Endothelial cell of umbilical vein (primary cell): ENCODE measurements at regions of chr6 and their contacts with region 1.

Region 1: GRCh38 chr6:70310063-70310694 is 7.3 kb upstream of the COL9A1 start:
- DNase-seq: peak; percentile 54
- H3K4me3 ChIP-seq: no peak overlapping the region
- H3K27ac ChIP-seq: no peak overlapping the region
- H3K4me1 ChIP-seq: no peaks in the 10 kb centered on the region
- H3K27me3 ChIP-seq: peaks cover 0 to 5% of the 10 kb centered on the region in 2 experiments
- CTCF ChIP-seq: peak; percentile 25 to 33
- POLR2A ChIP-seq: no peak

Region 2: GRCh38 chr6:69985180-69985579 is 325.0 kb before region 1 on chr6:
- CTCF ChIA-PET with region 1: no interaction called
- POLR2A ChIA-PET with region 1: no interaction called
- dilution Hi-C with region 1: no loop called
- intact Hi-C with region 1: no loop called
- DNase-seq: no peak
- H3K4me3 ChIP-seq: no peak overlapping the region
- H3K27ac ChIP-seq: no peak overlapping the region
- H3K4me1 ChIP-seq: no peaks in the 10 kb centered on the region
- H3K27me3 ChIP-seq: no peaks in the 10 kb centered on the region
- CTCF ChIP-seq: no peak
- POLR2A ChIP-seq: no peak

Region 3: GRCh38 chr6:70289299-70289698 is 20.9 kb before region 1 on chr6:
- CTCF ChIA-PET with region 1: interaction called, 10 read pairs
- POLR2A ChIA-PET with region 1: no interaction called
- dilution Hi-C with region 1: no loop called
- intact Hi-C with region 1: no loop called
- DNase-seq: no peak
- H3K4me3 ChIP-seq: no peak overlapping the region
- H3K27ac ChIP-seq: no peak overlapping the region
- H3K4me1 ChIP-seq: no peaks in the 10 kb centered on the region
- H3K27me3 ChIP-seq: peaks cover 0 to 2% of the 10 kb centered on the region in 2 experiments
- CTCF ChIP-seq: no peak
- POLR2A ChIP-seq: no peak

Region 4: GRCh38 chr6:70299456-70299855 is 10.7 kb before region 1 on chr6:
- CTCF ChIA-PET with region 1: interaction called, 10 read pairs
- POLR2A ChIA-PET with region 1: no interaction called
- dilution Hi-C with region 1: no loop called
- intact Hi-C with region 1: no loop called
- DNase-seq: no peak
- H3K4me3 ChIP-seq: no peak overlapping the region
- H3K27ac ChIP-seq: no peak overlapping the region
- H3K4me1 ChIP-seq: no peaks in the 10 kb centered on the region
- H3K27me3 ChIP-seq: no peaks in the 10 kb centered on the region
- CTCF ChIP-seq: no peak
- POLR2A ChIP-seq: no peak

Region 5: GRCh38 chr6:70955441-70956190 is 645.4 kb after region 1 on chr6:
- CTCF ChIA-PET with region 1: interaction called, 87 read pairs
- POLR2A ChIA-PET with region 1: no interaction called
- dilution Hi-C with region 1: no loop called
- intact Hi-C with region 1: loop called (anchors 5 kb)
- DNase-seq: peak; percentile 65
- H3K4me3 ChIP-seq: peak overlapping the region in 2 of 3 experiments; percentile 13 to 31
- H3K27ac ChIP-seq: no peak overlapping the region
- H3K4me1 ChIP-seq: peaks cover 14% of the 10 kb centered on the region
- H3K27me3 ChIP-seq: peaks cover 36 to 72% of the 10 kb centered on the region in 2 experiments
- CTCF ChIP-seq: peak; percentile 84 to 94
- POLR2A ChIP-seq: no peak

Region 6: GRCh38 chr6:71012866-71013469 is 702.8 kb after region 1 on chr6:
- CTCF ChIA-PET with region 1: interaction called, 79 read pairs
- POLR2A ChIA-PET with region 1: no interaction called
- dilution Hi-C with region 1: no loop called
- intact Hi-C with region 1: loop called (anchors 2 kb)
- DNase-seq: peak; percentile 39
- H3K4me3 ChIP-seq: no peak overlapping the region
- H3K27ac ChIP-seq: no peak overlapping the region
- H3K4me1 ChIP-seq: no peaks in the 10 kb centered on the region
- H3K27me3 ChIP-seq: no peaks in the 10 kb centered on the region
- CTCF ChIP-seq: peak; percentile 69 to 71
- POLR2A ChIP-seq: no peak